Breast epithelium (tissue), 4 donors: ENCODE measurements at regions of chr2 and their contacts with region 1.

Region 1: DNA sequence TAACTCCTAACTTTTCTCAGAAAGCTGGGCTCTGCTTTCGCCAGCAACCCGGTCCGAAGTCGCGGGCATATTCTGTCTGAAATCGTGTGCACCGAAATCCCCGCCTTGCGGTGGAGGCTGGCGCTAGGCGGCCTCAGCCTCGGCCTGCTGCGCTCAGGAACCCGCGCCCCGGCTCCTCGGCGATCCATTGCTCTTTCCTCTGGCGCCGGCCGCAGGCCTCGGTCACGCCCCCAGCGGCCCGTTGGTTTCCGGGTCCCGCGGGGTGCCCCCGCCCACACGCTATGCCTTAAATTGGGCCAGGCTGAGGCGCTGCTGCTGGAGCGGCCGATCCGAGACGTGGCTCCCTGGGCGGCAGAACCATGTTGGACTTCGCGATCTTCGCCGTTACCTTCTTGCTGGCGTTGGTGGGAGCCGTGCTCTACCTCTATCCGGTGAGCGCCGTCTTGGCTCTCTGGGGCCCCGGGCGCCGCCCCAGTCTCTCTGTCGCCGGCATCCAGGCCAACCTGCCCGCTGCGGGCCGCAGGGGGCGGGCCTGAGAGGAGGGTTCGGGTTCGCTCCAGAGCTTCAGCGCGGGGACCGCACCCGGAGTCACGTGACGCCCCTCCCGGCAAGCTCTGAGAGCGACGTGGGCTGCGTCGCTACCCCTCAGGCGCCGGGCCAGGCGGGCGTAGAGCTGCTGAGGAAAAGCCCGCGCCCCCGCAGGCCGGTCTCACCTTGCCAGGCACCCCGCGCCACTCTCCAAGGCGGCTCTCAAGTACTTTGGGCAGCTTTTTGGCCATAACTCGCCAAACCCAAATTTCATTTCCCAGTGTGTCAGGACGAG is at the start of gene CYP20A1:
- DNase-seq: peak; percentile 93 to 94
- H3K4me3 ChIP-seq: peak within 1 kb of the TSS; percentile 68 to 80 (median 73)
- H3K27ac ChIP-seq: peak within 1 kb of the TSS; percentile 95
- H3K4me1 ChIP-seq: peaks cover 0 to 7% of the 10 kb centered on the region in 2 donors
- H3K27me3 ChIP-seq: no peaks in the 10 kb centered on the region
- CTCF ChIP-seq: peak; percentile 5 to 30 (median 28)
- POLR2A ChIP-seq: peak; percentile 38
- total RNA-seq, gene CYP20A1: 31.1 to 45.4 (median 37.6) TPM

Region 2: DNA sequence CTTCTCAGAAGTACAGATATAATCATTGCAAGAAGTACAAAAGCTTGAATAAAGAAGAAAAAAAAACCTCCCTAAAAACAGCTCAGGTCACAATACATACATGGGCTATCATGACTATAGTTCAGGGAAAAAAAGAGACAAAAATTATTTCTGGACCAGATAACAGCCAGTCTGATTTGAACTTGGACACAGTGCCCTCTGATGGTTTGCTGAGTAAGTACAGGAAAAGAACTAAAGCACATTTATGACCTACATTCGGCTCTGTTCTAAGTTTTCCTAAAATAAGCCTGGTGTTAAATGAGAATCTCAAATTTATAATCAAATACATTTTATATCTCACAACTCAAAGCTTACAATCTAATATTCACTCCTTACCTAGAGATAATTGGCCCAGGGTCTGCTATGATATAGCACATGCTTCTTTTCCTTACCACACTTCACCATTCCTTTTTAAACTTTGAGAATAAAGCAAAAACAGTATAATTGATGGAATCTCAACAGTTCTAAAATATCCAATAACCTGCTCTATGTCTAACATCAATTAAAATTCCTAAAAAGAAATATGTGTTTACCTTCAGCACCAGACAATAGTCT is 215.0 kb after region 1 on chr2:
- intact Hi-C with region 1: loop called (anchors 10 kb)
- DNase-seq: no peak
- H3K4me3 ChIP-seq: no peak overlapping the region
- H3K27ac ChIP-seq: no peak overlapping the region
- H3K4me1 ChIP-seq: no peaks in the 10 kb centered on the region
- H3K27me3 ChIP-seq: no peaks in the 10 kb centered on the region
- CTCF ChIP-seq: peak in 2 of 3 donors; percentile 58 to 65
- POLR2A ChIP-seq: no peak

Region 3: DNA sequence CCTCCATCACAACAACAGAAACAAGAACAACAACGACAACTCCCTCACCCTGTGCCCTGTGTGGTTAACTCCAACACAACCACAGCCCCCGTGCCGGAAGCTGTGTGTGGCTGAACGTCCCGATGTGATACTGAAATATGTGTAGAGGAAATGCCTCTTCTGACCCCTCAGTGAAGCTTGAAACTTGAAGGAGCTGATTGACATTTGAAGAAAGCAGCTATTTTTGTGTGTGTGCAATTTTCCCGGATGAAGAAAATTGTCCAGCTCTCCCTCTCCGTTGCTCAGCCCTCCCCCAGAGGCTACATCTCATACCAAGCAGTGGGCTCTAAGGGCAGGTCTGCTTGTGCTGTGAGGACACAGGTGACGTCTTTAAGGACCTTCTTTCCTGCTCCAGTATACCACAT is 871.4 kb after region 1 on chr2:
- intact Hi-C with region 1: loop called (anchors 5 kb)
- DNase-seq: no peak
- H3K4me3 ChIP-seq: no peak overlapping the region
- H3K27ac ChIP-seq: peak overlapping the region; percentile 65 to 68
- H3K4me1 ChIP-seq: no peaks in the 10 kb centered on the region
- H3K27me3 ChIP-seq: no peaks in the 10 kb centered on the region
- CTCF ChIP-seq: no peak
- POLR2A ChIP-seq: no peak